Thyroid gland (tissue), 4 donors: ENCODE measurements at regions of chr5 and their contacts with region 1.

Region 1: DNA sequence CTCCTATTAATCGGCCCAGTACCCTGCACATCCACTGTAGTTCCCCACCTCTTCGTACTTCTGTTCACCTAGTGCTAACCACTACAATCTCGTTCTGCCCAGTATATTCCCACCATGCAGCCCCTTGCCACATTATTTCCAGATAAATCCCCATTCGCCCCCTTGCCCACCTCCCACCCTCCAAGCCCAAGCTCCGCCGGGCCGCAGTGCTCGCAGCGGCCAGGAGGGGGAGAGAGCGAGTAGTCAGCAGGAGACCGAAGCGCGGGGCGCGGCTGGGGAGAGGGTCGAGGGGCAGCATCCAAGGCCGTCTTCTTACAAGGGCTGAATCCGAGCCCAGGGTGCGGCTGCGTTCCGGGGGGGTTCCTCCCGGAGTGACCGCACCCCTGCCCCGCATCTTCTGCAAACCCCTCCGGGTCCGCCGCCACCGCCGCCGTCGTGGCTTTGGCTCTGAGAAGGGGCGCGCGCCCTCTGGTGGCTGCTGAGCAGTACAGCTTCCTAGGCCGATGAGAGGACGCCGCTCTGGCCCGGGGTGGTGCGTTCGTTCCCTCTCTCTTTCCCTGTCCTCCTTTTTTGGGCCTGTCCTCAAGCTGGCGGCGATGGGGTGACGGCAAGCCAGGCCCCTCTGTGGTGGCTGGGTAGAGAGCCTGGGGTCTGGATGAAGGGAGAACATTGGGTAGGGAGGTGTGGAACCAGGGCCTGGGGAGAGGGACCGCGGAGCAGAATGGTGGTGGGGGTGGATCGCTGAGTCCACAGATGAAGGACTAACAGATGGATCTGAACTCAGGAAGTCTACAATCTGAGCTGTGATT is 30.0 kb upstream of the PSD2 start:
- DNase-seq: peak; percentile 68 to 77
- H3K4me3 ChIP-seq: peak overlapping the region in 1 of 3 donors; percentile 28
- H3K27ac ChIP-seq: no peak overlapping the region
- H3K4me1 ChIP-seq: peaks cover 0 to 3% of the 10 kb centered on the region in 2 donors
- H3K27me3 ChIP-seq: no peaks in the 10 kb centered on the region
- CTCF ChIP-seq: peak; percentile 94 to 100 (median 98)
- POLR2A ChIP-seq: no peak

Region 2: DNA sequence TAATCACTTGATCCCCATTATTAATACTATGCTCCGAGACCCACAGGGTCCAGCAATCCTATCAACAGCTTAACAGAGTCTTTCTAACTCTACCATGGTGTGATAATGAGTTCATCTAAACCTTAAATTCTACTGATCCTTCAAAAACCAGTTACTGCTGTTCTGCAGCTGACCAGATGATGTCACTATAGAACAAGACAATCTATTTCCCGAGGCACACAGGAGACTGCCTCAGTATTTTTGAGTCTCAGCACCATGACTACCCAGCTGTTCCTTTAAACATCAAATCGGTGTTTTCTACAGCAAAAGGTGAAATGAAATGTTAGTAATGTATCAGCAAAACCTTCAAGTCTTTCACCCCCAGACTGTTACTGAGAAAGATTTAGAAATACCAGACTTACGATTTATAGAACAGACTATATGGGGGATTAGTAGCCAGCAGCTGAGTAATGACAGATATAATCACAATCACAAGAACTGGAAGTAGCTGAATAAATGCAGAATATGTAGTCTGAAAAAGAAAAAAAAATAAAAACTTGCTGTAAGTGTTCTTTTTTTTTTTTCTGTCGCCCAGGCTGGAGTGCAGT is 343.2 kb before region 1 on chr5:
- intact Hi-C with region 1: loop called (anchors 10 kb)
- DNase-seq: peak in 1 of 2 donors; percentile 18
- H3K4me3 ChIP-seq: no peak overlapping the region
- H3K27ac ChIP-seq: no peak overlapping the region
- H3K4me1 ChIP-seq: peaks cover 10 to 13% of the 10 kb centered on the region in 2 donors
- H3K27me3 ChIP-seq: no peaks in the 10 kb centered on the region
- CTCF ChIP-seq: peak in 5 of 6 experiments; percentile 49 to 92 (median 83)
- POLR2A ChIP-seq: no peak

Region 3: GRCh38 chr5:139633295-139634027 is 132.2 kb before region 1 on chr5:
- intact Hi-C with region 1: loop called (anchors 2 kb)
- DNase-seq: peak; percentile 59 to 68
- H3K4me3 ChIP-seq: no peak overlapping the region
- H3K27ac ChIP-seq: no peak overlapping the region
- H3K4me1 ChIP-seq: peaks cover 27 to 38% of the 10 kb centered on the region in 2 donors
- H3K27me3 ChIP-seq: no peaks in the 10 kb centered on the region
- CTCF ChIP-seq: peak; percentile 89 to 100 (median 97)
- POLR2A ChIP-seq: no peak

Region 4: DNA sequence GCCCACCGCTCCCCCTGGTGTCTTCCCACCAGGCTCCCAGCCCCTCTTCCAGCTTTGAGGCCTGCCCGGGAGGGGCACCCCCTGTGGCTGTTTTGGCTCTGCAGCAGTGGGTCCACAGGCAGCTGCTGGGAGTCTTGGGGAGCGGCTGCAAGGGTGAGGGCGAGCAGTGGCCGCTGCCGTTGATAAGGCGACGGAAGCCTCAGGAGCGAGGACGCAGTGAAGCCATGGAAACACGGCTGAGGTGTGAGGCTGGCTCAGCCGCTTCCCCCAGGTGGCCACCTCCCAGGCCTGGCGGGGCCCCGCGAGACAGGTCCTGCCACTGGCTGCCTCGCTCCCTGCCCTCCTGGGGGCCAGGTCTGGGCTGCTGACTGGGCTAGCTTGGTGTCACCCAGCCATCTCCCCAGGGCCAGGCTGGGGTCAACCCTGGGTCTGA is 76.0 kb before region 1 on chr5:
- intact Hi-C with region 1: loop called (anchors 10 kb)
- DNase-seq: no peak
- H3K4me3 ChIP-seq: no peak overlapping the region
- H3K27ac ChIP-seq: peak overlapping the region in 2 of 3 donors; percentile 65 to 74
- H3K4me1 ChIP-seq: peaks cover 34 to 58% of the 10 kb centered on the region in 2 donors
- H3K27me3 ChIP-seq: no peaks in the 10 kb centered on the region
- CTCF ChIP-seq: no peak
- POLR2A ChIP-seq: no peak

Region 5: GRCh38 chr5:140509898-140510297 is 744.3 kb after region 1 on chr5:
- intact Hi-C with region 1: no loop called
- DNase-seq: no peak
- H3K4me3 ChIP-seq: no peak overlapping the region
- H3K27ac ChIP-seq: no peak overlapping the region
- H3K4me1 ChIP-seq: no peaks in the 10 kb centered on the region
- H3K27me3 ChIP-seq: no peaks in the 10 kb centered on the region
- CTCF ChIP-seq: no peak
- POLR2A ChIP-seq: no peak